Activated naive CD4-positive, alpha-beta T cell treated with anti-CD3 and anti-CD28 coated beads for 36 hours (primary cell): ENCODE measurements at regions of chr7 and their contacts with region 1.

Region 1: DNA sequence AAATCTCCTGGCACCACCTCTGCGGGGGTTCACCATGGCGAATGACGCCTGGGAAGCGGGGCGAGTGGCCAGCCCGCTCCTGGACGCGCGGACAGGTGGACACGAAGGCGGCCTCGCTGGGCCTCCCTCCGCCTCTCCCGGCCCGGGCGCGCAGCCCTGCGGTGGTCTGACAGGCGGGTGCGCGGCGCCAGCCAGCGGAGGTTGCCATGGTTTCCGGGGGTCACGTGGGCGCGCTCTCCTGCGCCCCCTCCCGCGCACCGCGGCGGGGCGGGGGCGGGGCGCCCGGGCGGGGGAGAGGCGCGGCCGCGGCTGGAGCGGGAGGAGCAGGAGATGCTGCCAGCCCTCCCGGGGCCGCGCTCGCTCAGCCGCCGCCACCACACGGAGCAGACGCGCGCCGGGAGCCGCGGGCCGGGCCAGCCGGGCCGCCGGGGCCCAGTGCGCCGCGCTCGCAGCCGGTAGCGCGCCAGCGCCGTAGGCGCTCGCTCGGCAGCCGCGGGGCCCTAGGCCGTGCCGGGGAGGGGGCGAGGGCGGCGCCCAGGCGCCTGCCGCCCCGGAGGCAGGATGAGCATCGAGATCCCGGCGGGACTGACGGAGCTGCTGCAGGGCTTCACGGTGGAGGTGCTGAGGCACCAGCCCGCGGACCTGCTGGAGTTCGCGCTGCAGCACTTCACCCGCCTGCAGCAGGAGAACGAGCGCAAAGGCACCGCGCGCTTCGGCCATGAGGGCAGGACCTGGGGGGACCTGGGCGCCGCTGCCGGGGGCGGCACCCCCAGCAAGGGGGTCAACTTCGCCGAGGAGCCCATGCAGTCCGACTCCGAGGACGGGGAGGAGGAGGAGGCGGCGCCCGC is at the start of gene PRKAR2B:
- DNase-seq: peak; percentile 66
- H3K4me3 Mint-ChIP-seq: peak within 1 kb of the TSS; percentile 82
- H3K27ac Mint-ChIP-seq: no peak within 1 kb of the TSS
- H3K4me1 Mint-ChIP-seq: peaks cover 9% of the 10 kb centered on the region
- H3K27me3 Mint-ChIP-seq: peaks cover 36% of the 10 kb centered on the region
- total RNA-seq, gene PRKAR2B: 1.5 TPM

Region 2: DNA sequence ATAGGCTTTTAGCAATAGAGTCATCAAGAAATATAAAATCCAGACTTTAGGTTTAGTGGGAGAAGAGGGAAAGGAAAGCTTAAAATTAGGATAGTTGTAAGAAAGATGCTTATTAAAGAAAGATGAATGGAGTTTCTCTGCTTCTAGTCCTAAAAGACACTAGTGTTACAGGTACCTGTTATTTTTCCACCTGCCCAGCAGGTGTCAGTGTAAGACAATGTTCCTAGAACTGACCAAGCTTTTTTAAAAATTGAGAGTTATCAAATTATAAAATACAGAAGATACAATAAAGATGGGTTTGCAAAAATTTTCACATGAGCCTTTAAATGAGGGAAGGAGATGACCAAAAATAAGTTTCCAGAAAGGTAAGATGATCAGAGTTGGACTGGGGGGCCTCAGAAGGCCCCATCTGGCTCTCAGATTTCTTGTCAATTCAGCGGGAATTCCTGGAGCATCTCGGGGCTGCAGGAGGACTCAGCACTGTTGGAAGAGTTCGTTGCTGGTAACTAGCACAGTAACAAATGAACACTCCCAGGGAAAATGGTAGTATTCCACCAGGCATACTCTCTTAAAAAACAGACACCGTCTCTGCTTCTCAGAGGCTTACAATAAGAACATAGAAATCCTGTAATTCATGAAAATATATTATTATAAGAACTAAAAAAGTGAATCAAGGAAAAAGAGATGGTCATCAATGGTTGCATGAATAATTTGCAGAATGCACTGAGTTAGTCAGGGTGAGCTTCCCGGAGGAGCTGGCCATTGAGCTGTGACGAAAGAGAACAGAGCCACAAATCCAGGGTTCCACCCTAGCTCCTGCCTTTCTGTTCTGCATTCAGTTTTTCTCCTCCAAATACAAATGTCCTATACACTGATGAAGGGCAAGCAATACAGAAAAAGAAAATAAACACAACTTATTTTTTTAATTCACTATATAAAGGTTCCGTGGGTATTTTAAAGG is 251.3 kb before region 1 on chr7:
- CTCF ChIA-PET with region 1: no interaction called
- intact Hi-C with region 1: loop called (anchors 5 kb)
- DNase-seq: peak; percentile 54
- H3K4me3 Mint-ChIP-seq: no peak overlapping the region
- H3K27ac Mint-ChIP-seq: no peak overlapping the region
- H3K4me1 Mint-ChIP-seq: no peaks in the 10 kb centered on the region
- H3K27me3 Mint-ChIP-seq: no peaks in the 10 kb centered on the region

Region 3: GRCh38 chr7:107130487-107131225 is 86.1 kb after region 1 on chr7:
- CTCF ChIA-PET with region 1: no interaction called
- intact Hi-C with region 1: loop called (anchors 2 kb)
- DNase-seq: no peak
- H3K4me3 Mint-ChIP-seq: no peak overlapping the region
- H3K27ac Mint-ChIP-seq: no peak overlapping the region
- H3K4me1 Mint-ChIP-seq: peaks cover 10% of the 10 kb centered on the region
- H3K27me3 Mint-ChIP-seq: no peaks in the 10 kb centered on the region

Region 4: GRCh38 chr7:107890962-107891635 is 846.5 kb after region 1 on chr7 and contains the start of gene DLD:
- CTCF ChIA-PET with region 1: no interaction called
- intact Hi-C with region 1: loop called (anchors 10 kb)
- DNase-seq: peak; percentile 96
- H3K4me3 Mint-ChIP-seq: peak within 1 kb of the TSS; percentile 100
- H3K27ac Mint-ChIP-seq: peak within 1 kb of the TSS; percentile 98
- H3K4me1 Mint-ChIP-seq: peaks cover 37% of the 10 kb centered on the region
- H3K27me3 Mint-ChIP-seq: no peaks in the 10 kb centered on the region
- total RNA-seq, gene DLD: 92.6 to 96.8 TPM